ENCODE measurements at regions of chr16 and their contacts with region 1.

Region 1: DNA sequence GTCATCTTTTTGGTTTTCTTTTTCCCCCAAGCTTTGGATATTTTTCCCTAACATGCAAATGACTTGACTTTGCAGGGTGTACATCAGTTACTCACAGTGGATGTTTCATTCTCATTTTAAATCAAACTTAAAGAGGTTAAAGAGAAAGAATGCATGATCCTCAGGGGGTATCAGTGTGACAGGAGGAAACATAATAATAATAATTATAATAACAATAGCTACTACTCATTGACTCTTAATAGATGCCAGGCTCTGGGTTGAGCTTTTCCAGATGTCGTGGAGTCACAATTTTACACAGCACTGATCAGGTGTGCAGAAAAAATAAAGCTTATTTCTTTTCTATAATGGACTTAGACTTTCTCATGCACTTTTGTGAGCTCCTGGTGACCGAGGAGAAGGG is 157.2 kb upstream of the CACNG3 start:
- DNase-seq: no peak
- ATAC-seq: no peak
- H3K4me3 ChIP-seq: no peak overlapping the region
- H3K27ac ChIP-seq: no peak overlapping the region
- H3K4me1 ChIP-seq: no peaks in the 10 kb centered on the region
- H3K27me3 ChIP-seq: 0 out of 2 replicates have a peak, but pooled peaks cover 7% of the 10 kb centered on the region
- CTCF ChIP-seq: no peak

Region 2: GRCh38 chr16:24428756-24429155 is 329.9 kb after region 1 on chr16:
- CTCF ChIA-PET with region 1: interaction called, 11 read pairs
- POLR2A ChIA-PET with region 1: no interaction called
- in situ Hi-C with region 1: no loop called
- intact Hi-C with region 1: no loop called
- DNase-seq: no peak
- ATAC-seq: no peak
- H3K4me3 ChIP-seq: no peak overlapping the region
- H3K27ac ChIP-seq: no peak overlapping the region
- H3K4me1 ChIP-seq: no peaks in the 10 kb centered on the region
- H3K27me3 ChIP-seq: no peaks in the 10 kb centered on the region
- CTCF ChIP-seq: no peak

Measured in Panc1 (cell line).